ENCODE measurements at regions of chr20 and their contacts with region 1.

Region 1: DNA sequence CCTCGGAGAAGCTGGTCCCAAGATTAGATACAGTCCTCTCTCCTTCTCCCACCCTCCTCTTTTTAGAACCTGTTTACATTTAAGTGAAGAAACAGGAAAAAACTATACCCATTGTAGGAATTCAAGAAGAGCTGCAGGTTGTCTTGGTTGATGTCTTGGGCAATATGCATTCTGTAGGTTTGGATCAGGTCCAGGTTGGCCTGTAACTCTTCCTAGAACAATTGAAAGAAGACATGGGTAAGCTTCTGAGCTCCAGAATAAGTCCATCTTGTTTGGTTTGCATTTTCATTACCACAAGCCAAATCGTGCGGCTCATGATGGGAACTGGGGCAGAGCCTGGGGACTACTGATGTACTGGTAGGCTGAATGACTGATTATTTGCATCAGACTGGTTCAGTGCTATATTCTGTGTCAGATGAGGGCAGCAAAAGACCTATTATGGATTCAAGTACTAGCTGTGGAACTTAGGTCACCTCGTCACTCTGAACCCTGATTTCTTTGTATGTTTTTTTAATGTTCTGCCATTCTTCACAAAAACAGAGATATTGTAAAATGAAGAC is 20.3 kb upstream of the SLA2 start:
- DNase-seq: peak; percentile 46
- ATAC-seq: peak; percentile 86
- H3K4me3 ChIP-seq: no peak overlapping the region
- H3K27ac ChIP-seq: no peak overlapping the region
- H3K4me1 ChIP-seq: no peaks in the 10 kb centered on the region; the same call in 1 of the 2 replicates
- H3K27me3 ChIP-seq: no peaks in the 10 kb centered on the region
- CTCF ChIP-seq: peak; percentile 46
- POLR2A ChIP-seq: no peak
- RAD21 ChIP-seq: peak; percentile 49

Region 2: DNA sequence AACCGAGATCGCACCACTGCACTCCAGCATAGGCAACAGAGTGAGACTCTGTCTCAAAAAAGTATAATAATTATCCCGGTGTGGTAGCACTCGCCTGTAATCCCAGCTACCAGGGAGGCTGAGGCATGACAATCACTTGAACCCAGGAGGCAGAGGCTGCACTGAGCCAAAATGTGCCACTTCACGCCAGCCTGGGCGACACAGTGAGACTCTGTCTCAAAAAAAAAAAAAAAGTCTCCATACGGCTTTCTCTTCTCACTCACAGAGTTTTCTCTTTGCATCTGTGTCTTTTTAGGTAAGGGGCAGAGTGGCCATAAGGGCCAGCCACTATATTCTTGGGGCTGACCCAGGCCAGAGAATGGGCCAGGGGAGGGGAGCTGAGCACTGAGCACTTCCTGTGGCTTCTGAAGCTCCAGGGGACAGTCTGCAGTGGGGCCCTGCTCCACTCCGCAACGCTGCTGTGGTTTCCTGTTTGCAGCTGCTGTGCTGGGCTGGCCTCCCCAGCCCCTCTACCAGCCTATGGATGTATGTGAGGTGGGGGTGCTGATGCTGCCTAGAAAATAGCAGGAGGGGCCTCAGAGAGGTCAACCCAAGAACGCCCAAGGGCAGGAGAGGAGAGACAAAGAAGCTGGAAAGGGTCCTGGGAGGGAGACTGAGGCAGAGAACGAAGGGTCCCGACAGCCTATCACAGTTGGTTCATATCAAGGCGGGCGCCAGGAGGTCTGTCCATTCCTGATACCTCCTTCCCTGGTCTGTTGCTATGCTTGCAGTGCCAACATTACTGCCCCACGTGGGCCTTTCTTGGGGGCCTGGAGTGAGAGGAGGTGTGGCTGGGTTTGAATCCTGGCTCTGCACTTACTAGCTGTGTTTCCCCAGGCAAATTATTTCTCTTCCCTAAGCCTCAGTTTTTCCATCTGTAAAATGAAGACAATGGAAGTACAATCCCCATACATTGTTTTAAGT is 36.3 kb before region 1 on chr20:
- CTCF ChIA-PET with region 1: no interaction called
- POLR2A ChIA-PET with region 1: no interaction called
- dilution Hi-C with region 1: no loop called
- in situ Hi-C with region 1: no loop called
- intact Hi-C with region 1: no loop called
- DNase-seq: no peak
- ATAC-seq: peak; percentile 11; the same call in 1 of the 2 replicates
- H3K4me3 ChIP-seq: no peak overlapping the region
- H3K27ac ChIP-seq: no peak overlapping the region
- H3K4me1 ChIP-seq: no peaks in the 10 kb centered on the region
- H3K27me3 ChIP-seq: no peaks in the 10 kb centered on the region
- CTCF ChIP-seq: no peak
- POLR2A ChIP-seq: no peak
- RAD21 ChIP-seq: no peak

Region 3: GRCh38 chr20:36709126-36709525 is 42.9 kb after region 1 on chr20:
- CTCF ChIA-PET with region 1: no interaction called
- POLR2A ChIA-PET with region 1: no interaction called
- dilution Hi-C with region 1: no loop called
- in situ Hi-C with region 1: no loop called
- intact Hi-C with region 1: loop called (anchors 1 kb)
- DNase-seq: no peak
- ATAC-seq: no peak
- H3K4me3 ChIP-seq: no peak overlapping the region
- H3K27ac ChIP-seq: no peak overlapping the region
- H3K4me1 ChIP-seq: no peaks in the 10 kb centered on the region
- H3K27me3 ChIP-seq: no peaks in the 10 kb centered on the region
- CTCF ChIP-seq: no peak
- POLR2A ChIP-seq: no peak
- RAD21 ChIP-seq: no peak

Region 4: DNA sequence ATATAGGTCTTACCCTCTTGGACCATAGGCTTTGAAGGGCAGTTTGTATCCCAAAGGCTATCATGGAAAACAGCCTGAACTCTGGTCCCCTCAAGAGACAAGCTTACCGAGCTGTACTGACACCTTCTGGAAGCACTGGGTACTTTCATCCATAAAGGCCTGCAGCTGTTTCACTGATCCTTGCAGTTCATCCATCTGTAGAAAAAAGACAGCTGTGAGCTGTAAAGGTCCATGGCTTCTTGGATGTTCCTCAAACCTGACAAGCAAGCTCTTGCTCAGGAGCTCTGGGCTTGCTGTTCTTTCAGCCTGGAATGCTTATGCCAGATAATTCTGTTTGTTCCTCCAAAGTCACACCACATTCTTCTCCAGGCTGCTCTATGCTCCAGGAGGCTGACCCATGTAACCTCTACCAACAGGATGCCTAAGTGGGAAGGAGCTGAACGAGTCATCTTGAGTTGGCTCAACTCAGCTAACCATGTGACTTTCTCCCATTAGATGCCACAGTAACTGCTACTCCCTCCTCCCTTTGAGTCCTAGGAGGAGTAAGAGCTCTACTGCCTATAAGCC is 88.5 kb after region 1 on chr20:
- CTCF ChIA-PET with region 1: interaction called, 4 read pairs
- POLR2A ChIA-PET with region 1: no interaction called
- dilution Hi-C with region 1: no loop called
- in situ Hi-C with region 1: no loop called
- intact Hi-C with region 1: loop called (anchors 1 kb)
- DNase-seq: peak; percentile 88
- ATAC-seq: peak; percentile 98
- H3K4me3 ChIP-seq: no peak overlapping the region
- H3K27ac ChIP-seq: peak overlapping the region; percentile 4; the same call in 1 of the 2 replicates
- H3K4me1 ChIP-seq: no peaks in the 10 kb centered on the region
- H3K27me3 ChIP-seq: no peaks in the 10 kb centered on the region
- CTCF ChIP-seq: peak; percentile 81
- POLR2A ChIP-seq: no peak
- RAD21 ChIP-seq: peak; percentile 76

Measured in IMR-90 (cell line).